Endothelial cell of umbilical vein (primary cell): ENCODE measurements at regions of chr18 and their contacts with region 1.

Region 1: GRCh38 chr18:12947355-12948041 is at the start of gene SEH1L:
- DNase-seq: peak; percentile 98
- H3K4me3 ChIP-seq: peak within 1 kb of the TSS; percentile 50 to 81 (median 80)
- H3K27ac ChIP-seq: peak within 1 kb of the TSS; percentile 90
- H3K4me1 ChIP-seq: peaks cover 12% of the 10 kb centered on the region
- H3K27me3 ChIP-seq: no peaks in the 10 kb centered on the region
- CTCF ChIP-seq: no peak
- POLR2A ChIP-seq: no peak
- total RNA-seq, gene SEH1L: 42.8 and 45.9 TPM in 2 replicates

Region 2: GRCh38 chr18:12376718-12377555 is 570.6 kb before region 1 on chr18 and contains the start of gene AFG3L2:
- CTCF ChIA-PET with region 1: no interaction called
- POLR2A ChIA-PET with region 1: interaction called, 4 read pairs
- dilution Hi-C with region 1: no loop called
- intact Hi-C with region 1: loop called (anchors 1 kb)
- DNase-seq: peak; percentile 100
- H3K4me3 ChIP-seq: peak within 1 kb of the TSS; percentile 62 to 85 (median 72)
- H3K27ac ChIP-seq: peak within 1 kb of the TSS; percentile 89
- H3K4me1 ChIP-seq: peaks cover 9% of the 10 kb centered on the region
- H3K27me3 ChIP-seq: no peaks in the 10 kb centered on the region
- CTCF ChIP-seq: no peak
- POLR2A ChIP-seq: peak; percentile 93
- total RNA-seq, gene AFG3L2: 40.6 and 42.4 TPM in 2 replicates

Region 3: GRCh38 chr18:12857215-12857905 is 90.1 kb before region 1 on chr18:
- CTCF ChIA-PET with region 1: no interaction called
- POLR2A ChIA-PET with region 1: no interaction called
- dilution Hi-C with region 1: no loop called
- intact Hi-C with region 1: no loop called
- DNase-seq: no peak
- H3K4me3 ChIP-seq: no peak overlapping the region
- H3K27ac ChIP-seq: no peak overlapping the region
- H3K4me1 ChIP-seq: no peaks in the 10 kb centered on the region
- H3K27me3 ChIP-seq: no peaks in the 10 kb centered on the region
- CTCF ChIP-seq: no peak
- POLR2A ChIP-seq: no peak

Region 4: DNA sequence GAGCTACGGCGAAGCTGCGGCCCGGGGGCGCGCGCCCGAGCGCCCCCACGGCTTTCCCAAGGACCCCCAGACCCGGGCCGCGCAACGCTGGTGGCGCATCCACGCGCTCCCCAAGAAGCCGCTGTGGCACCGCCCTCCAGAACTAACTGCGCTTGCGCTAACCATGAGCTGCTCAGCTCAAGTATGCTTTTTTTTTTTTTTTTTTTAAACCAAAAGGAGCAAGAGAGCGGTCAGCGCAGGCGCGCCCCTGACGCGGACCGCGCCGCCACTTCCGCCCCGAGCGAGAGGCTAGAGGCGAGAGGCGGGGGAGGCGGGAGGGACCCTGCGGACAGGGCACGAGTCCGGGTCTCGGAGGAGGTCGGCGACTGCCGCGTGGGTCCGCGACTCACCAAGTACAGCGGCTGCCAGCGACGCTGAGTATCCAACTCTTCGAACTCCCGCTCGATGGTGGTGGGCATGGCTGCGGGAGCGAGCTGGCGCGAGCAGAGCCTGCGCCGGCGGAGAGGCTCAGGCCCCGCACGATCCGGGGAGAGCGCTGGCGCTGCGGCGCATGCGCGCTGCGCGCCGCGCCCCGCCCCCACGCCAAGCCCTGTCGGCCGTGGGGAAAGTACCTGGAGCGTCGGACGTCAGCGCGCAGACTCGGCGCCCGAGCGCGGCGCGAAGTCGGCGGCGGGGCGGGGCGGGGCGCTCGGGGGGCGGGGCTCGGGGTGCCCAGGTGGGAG is 63.7 kb before region 1 on chr18 and contains the start of gene PTPN2:
- CTCF ChIA-PET with region 1: interaction called, 4 read pairs
- POLR2A ChIA-PET with region 1: no interaction called
- dilution Hi-C with region 1: no loop called
- intact Hi-C with region 1: loop called (anchors 5 kb)
- DNase-seq: peak; percentile 95
- H3K4me3 ChIP-seq: peak within 1 kb of the TSS; percentile 72 to 92 (median 74)
- H3K27ac ChIP-seq: peak within 1 kb of the TSS; percentile 97
- H3K4me1 ChIP-seq: peaks cover 6% of the 10 kb centered on the region
- H3K27me3 ChIP-seq: no peaks in the 10 kb centered on the region
- CTCF ChIP-seq: no peak
- POLR2A ChIP-seq: peak; percentile 96
- total RNA-seq, gene PTPN2: 20.9 and 21.7 TPM in 2 replicates

Region 5: DNA sequence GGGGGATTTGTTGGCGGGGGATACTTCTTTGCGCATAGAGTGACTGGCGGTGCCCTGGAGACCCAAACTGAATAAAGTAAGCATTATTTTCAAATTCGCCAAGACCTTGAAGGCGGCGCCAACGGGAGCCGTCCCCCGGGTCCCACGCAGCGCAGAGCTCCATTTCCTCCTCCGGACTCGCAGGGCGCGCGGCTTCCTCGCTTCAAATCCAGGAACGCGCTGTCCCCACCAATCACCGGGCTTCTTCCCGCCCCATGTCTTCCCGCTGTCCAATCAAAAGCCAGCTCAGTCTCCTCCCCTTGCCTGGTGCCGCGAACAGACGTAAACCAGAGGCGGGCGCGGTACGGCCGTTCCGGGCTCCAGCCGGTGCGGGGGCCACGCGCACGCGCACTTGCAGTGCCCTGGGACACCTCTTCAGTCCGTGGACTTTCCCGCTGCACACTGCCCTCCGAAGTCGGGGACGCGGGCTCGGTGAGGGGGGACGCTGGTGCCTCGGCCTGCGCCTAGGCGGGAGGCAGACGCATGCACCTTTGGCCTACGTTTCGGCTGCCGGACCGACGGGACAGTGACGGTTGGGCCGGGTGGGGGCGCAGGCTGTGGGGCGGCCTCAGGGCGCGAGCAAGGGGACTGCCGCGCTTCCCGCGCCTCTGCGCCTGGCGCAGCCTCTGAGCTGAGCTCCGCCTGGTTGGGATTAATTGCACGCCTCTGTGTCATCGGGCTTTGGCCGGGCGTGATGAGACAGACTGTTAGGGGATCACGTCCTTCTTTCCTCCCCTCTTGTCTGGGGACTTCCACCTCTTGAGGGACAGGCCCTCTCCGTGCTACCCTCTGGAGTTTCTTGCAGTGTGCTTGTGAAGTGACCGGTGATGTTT is 43.7 kb after region 1 on chr18 and contains the start of gene CEP192:
- CTCF ChIA-PET with region 1: no interaction called
- POLR2A ChIA-PET with region 1: no interaction called
- dilution Hi-C with region 1: no loop called
- intact Hi-C with region 1: loop called (anchors 1 kb)
- DNase-seq: peak; percentile 99
- H3K4me3 ChIP-seq: peak within 1 kb of the TSS; percentile 72 to 97 (median 90)
- H3K27ac ChIP-seq: peak within 1 kb of the TSS; percentile 62
- H3K4me1 ChIP-seq: peaks cover 20% of the 10 kb centered on the region
- H3K27me3 ChIP-seq: no peaks in the 10 kb centered on the region
- CTCF ChIP-seq: peak in 1 of 2 donors; percentile 13
- POLR2A ChIP-seq: peak; percentile 94
- total RNA-seq, gene CEP192: 22.7 and 22.9 TPM in 2 replicates

Region 6: GRCh38 chr18:13011719-13012118 is 64.2 kb after region 1 on chr18:
- CTCF ChIA-PET with region 1: no interaction called
- POLR2A ChIA-PET with region 1: no interaction called
- dilution Hi-C with region 1: no loop called
- intact Hi-C with region 1: no loop called
- DNase-seq: no peak
- H3K4me3 ChIP-seq: no peak overlapping the region
- H3K27ac ChIP-seq: no peak overlapping the region
- H3K4me1 ChIP-seq: no peaks in the 10 kb centered on the region
- H3K27me3 ChIP-seq: no peaks in the 10 kb centered on the region
- CTCF ChIP-seq: no peak
- POLR2A ChIP-seq: no peak